Panc1 (cell line): ENCODE measurements at regions of chr7 and their contacts with region 1.

Region 1: DNA sequence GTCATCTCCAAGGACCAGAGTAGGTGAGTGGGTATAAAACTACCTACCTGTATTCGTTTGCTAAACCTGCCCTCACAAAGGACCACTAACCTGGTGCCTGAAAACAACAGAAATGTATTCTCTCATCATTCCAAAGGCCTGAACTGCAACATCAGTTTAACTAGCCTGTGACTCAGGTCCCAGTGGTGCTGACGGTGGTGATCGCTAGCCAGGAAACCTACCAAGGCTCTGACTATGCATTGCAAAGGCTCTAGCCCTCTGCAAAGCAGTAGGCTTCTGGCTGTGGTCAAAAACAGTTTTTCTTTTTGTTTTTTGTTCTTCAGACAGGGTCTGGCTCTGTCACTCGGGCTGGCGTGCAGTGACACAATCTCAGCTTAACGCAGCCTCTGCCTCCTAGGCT is 107.5 kb downstream of the NPTX2 start:
- DNase-seq: no peak
- ATAC-seq: no peak; the same call in 1 of the 2 replicates
- H3K4me3 ChIP-seq: no peak overlapping the region
- H3K27ac ChIP-seq: no peak overlapping the region
- H3K4me1 ChIP-seq: 0 out of 2 replicates have a peak, but pooled peaks cover 2% of the 10 kb centered on the region
- H3K27me3 ChIP-seq: no peaks in the 10 kb centered on the region
- CTCF ChIP-seq: no peak

Region 2: GRCh38 chr7:98788966-98789365 is 64.4 kb after region 1 on chr7:
- CTCF ChIA-PET with region 1: no interaction called
- POLR2A ChIA-PET with region 1: interaction called, 11 read pairs
- in situ Hi-C with region 1: no loop called
- intact Hi-C with region 1: no loop called
- DNase-seq: no peak
- ATAC-seq: peak; percentile 24; the same call in 1 of the 2 replicates
- H3K4me3 ChIP-seq: no peak overlapping the region
- H3K27ac ChIP-seq: no peak overlapping the region
- H3K4me1 ChIP-seq: no peaks in the 10 kb centered on the region
- H3K27me3 ChIP-seq: no peaks in the 10 kb centered on the region
- CTCF ChIP-seq: no peak